Pancreas (tissue), 10 donors: ENCODE measurements at regions of chr4 and their contacts with region 1.

Region 1: DNA sequence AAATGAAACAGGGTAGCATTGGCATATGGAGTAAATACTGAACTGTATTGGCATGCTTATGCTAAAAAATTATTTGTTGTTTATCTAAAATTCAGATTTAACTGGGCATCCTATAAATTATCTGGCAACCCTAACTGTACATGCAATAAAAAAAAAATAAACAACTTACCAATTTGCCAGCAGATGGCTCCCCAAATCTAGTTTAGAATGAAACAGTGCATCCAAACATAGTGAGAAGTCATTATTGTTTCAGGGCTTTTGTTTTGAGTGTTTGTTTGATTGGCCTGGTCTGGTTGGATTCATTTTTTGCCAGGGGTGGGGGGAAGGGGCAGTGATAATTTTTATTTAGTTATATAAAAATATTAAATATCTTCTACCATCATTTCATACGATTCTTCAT is 12.8 kb upstream of the NSUN7 start:
- DNase-seq: no peak
- ATAC-seq: peak in 3 of 4 donors; percentile 62 to 70 (median 62)
- H3K4me3 ChIP-seq: no peak overlapping the region
- H3K27ac ChIP-seq: no peak overlapping the region
- H3K4me1 ChIP-seq: peaks cover 1 to 4% (median 3%) of the 10 kb centered on the region in 3 donors
- H3K27me3 ChIP-seq: no peaks in the 10 kb centered on the region
- CTCF ChIP-seq: no peak

Region 2: DNA sequence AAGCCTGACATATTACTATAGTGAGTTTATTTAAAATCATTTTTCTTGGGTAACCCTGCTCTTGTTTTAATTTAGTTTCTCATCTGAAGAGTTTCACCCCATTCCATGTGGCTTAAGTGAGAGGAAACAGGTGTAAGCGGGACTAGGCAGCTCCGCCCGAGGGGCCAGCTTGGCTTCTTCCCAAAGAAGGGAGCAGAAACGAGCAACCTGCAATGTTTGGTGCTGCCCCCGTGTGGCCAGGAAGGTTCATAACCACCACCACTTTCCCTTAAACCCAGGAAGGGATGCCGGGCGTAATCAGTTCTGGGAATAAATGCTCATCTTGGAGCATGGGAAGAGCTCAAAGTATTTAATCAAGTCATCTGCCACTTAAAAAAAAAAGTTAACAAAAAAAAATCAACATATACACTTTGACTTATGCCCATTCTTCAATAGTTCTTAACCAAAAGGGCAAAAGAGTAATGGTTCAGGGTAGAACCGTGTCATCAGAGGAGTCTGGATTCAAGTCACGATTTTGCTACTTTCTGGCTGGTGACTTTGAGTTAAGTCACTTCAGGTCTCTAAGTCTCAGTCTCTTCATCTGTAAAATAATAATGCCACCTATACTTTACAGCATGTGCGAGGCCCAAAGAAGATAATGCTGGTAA is 160.8 kb after region 1 on chr4:
- intact Hi-C with region 1: loop called in 1 of 3 experiments (anchors 5 kb)
- DNase-seq: peak; percentile 60 to 88 (median 77)
- ATAC-seq: peak; percentile 89 to 96 (median 91)
- H3K4me3 ChIP-seq: peak overlapping the region in 2 of 4 donors; percentile 20 to 33
- H3K27ac ChIP-seq: no peak overlapping the region
- H3K4me1 ChIP-seq: no peaks in the 10 kb centered on the region
- H3K27me3 ChIP-seq: no peaks in the 10 kb centered on the region
- CTCF ChIP-seq: peak; percentile 62 to 78 (median 66)